ENCODE measurements at regions of chr2 and their contacts with region 1.

Region 1: DNA sequence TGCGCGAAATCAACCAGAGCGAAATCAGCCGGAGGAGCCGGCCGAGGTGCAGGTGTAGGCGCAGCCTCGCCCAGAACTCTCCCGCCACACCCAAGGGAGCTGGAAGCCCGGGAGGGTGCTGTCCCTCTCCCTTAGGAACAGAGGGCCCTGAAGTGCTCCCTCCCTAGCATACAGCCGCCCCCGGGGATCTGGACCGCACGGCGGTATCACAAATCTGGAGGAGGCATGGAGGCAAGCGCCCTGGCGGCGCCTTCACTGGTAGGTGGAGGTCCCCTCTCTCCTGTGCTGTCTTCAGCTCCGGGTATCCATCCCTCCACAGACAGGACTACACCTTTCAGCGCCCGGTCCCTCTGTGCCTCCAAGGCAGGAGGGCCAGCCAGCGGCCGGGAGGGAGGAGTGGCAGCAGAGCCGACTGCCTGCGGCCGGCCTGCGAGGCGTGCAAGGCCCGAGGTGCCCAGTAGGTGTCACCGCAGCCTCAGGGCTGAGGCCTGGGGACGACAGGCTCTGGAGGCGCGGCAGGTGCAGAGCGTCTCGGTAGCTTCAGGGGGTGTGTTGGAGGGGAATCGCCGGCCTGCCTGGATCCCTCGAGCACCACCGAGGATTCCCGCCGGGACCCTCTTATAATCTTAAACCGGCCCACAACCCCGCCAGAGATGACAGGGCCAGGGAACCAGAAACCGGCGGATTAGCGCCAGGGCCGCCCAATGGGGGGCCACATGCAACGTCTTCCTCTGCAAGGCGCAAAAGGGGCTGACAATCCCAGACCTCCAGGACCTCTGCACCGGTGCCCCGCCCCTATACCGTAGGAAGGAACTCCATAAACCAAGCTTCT is 2.8 kb downstream of the IHH start:
- DNase-seq: peak; percentile 73
- H3K4me3 ChIP-seq: peak overlapping the region; percentile 44
- H3K27ac ChIP-seq: no peak overlapping the region
- H3K4me1 ChIP-seq: peaks cover 41% of the 10 kb centered on the region
- H3K27me3 ChIP-seq: peaks cover 100% of the 10 kb centered on the region
- CTCF ChIP-seq: peak; percentile 99

Region 2: DNA sequence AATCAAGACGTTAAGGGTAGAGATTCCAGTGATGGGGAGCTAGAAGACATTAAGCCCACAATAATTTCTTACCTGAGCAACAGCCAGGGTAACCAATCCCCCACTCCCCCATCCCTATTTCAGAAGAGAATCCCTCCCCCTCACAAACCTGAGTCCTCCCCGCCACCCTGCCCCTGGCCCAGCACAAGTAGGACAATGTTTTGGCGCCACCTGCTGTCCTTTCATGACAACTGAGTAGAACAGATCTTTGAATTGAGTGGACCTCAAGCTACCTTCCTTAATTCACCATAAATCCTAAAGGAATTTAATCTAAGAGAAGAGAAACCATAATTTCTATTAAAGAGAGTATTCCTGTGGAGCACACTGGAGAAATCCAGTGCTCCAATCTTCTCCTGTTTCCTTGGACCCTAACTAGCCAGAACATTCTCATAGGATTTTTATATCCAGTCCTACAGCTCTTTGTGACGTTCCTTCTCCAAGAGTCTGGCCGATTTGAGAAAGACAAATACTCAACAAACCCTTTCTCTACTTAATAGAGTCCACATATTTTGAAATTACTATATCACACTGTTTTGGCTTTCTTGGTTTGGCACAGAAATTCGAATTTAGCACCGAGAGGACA is 61.6 kb after region 1 on chr2:
- intact Hi-C with region 1: loop called (anchors 10 kb)
- DNase-seq: peak; percentile 43
- H3K4me3 ChIP-seq: no peak overlapping the region
- H3K27ac ChIP-seq: no peak overlapping the region
- H3K4me1 ChIP-seq: peaks cover 23% of the 10 kb centered on the region
- H3K27me3 ChIP-seq: peaks cover 5% of the 10 kb centered on the region
- CTCF ChIP-seq: peak; percentile 80

Region 3: GRCh38 chr2:219149667-219150066 is 91.7 kb after region 1 on chr2:
- intact Hi-C with region 1: loop called (anchors 5 kb)
- DNase-seq: no peak
- H3K4me3 ChIP-seq: no peak overlapping the region
- H3K27ac ChIP-seq: no peak overlapping the region
- H3K4me1 ChIP-seq: peaks cover 8% of the 10 kb centered on the region
- H3K27me3 ChIP-seq: no peaks in the 10 kb centered on the region
- CTCF ChIP-seq: no peak

Measured in left ventricle myocardium inferior (tissue), 1 donor.